ENCODE measurements at regions of chr1 and their contacts with region 1.

Region 1: DNA sequence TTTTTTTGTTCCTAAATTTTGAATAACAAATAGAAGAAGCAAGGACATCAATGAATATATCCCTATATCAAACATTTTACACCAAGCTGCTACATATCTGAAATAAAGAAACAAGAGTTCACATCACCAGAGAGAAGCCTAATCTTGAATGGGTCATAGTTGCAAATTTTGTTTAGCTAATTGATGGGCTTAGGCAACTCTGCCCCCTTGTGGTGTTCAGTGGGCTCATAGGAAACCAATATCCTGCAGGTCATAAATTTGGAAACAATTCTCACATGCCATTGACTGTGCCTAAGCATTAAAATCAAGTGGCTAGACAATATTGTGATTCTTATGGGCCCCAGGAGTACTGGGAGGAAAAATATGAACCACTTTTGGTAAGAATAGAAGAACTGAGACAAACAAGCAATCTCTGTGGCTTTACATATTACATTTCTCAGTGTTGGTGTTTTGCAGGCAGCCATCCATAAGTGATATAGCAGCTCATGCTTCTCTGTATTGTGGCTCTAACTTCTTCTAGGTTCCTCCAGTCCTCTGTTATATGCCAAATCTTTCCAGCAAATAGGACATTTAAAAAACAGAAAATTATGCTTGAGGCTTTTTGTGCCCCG is 1262.8 kb upstream of the PRMT6 start:
- ATAC-seq: peak; percentile 40 to 73 (median 64)
- H3K4me3 ChIP-seq: no peak overlapping the region
- H3K27ac ChIP-seq: no peak overlapping the region
- H3K4me1 ChIP-seq: peaks cover 0 to 4% of the 10 kb centered on the region in 2 donors

Region 2: DNA sequence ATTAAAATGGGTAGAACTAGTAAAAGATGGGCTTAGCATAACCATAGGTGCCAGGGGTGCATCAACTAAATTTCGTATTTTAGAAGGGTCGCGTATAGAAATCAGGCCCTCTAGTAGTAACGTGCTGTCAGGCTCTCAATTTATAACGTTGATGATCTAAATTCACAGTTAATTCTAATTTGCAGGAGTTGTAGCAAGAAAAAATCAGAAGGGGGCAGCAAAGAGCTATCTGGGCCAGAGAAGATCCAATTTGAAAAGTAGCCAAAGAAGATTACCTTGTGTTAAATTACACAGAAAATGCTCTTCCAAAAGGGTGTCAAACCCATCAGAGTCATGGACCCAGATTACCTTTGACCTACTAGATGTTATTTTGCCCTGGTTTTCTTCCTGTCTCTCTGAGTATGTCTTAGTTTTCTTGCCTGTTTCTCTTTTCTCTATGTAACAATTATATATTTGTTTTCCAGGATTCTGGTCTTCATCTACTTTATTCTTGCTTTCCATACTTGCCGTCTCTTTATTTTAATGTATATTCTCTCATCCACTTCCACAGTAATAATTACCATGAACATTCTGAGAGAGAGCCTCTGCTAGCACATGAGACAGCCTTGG is 1013.1 kb before region 1 on chr1:
- in situ Hi-C with region 1: loop called in 3 of 9 experiments (anchors 25 kb)
- ATAC-seq: no peak
- H3K4me3 ChIP-seq: no peak overlapping the region
- H3K27ac ChIP-seq: no peak overlapping the region
- H3K4me1 ChIP-seq: peaks cover 0 to 2% of the 10 kb centered on the region in 2 donors

Region 3: DNA sequence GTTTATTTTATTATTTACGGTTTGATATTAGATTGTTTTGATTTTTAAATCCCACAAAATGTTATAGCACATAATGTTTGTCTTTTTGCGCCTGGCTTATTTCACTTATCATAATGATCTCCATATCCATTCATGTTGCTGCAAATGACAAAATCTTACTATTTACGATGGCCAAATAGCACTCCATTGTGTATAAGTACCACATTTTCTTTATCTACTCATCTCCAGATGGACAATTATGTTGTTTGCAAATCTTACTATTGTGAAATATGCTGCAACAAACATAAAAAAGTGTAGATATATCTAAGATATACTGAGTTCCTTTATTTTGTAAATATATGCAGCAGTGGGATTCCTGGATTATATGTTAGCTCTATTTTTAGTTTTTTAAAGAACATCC is 475.7 kb before region 1 on chr1:
- in situ Hi-C with region 1: no loop called
- ATAC-seq: no peak
- H3K4me3 ChIP-seq: no peak overlapping the region
- H3K27ac ChIP-seq: no peak overlapping the region
- H3K4me1 ChIP-seq: no peaks in the 10 kb centered on the region

Region 4: GRCh38 chr1:105686874-105687690 is 106.6 kb before region 1 on chr1:
- in situ Hi-C with region 1: loop called in 1 of 9 experiments (anchors 25 kb)
- ATAC-seq: no peak
- H3K4me3 ChIP-seq: no peak overlapping the region
- H3K27ac ChIP-seq: no peak overlapping the region
- H3K4me1 ChIP-seq: no peaks in the 10 kb centered on the region